ENCODE measurements at regions of chr21 and their contacts with region 1.

Region 1: DNA sequence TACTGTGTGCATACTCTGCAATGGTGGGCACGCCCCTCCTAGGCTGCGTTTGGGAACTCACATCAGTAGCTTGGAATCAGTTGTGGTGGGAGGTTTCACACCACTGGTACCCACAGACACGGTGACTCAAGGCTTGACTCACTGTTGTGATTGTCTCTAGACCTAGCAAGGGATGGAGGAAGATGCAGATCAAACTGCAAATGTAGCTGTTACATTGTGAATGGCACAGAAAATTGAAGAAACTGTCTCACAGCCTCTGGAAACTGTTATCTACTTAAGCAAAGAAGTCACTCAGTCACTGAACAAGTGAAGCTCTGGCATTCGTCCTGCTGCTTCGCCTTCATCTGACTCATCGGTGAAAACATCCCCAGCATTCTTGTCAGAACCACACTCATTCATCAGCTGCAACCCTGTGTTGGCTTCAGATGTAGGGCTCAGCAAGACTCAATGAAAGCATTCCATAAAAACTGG is 59.5 kb downstream of the POFUT2 start:
- DNase-seq: peak; percentile 61
- H3K4me3 Mint-ChIP-seq: no peak overlapping the region
- H3K27ac Mint-ChIP-seq: peak overlapping the region; percentile 41
- H3K4me1 Mint-ChIP-seq: peaks cover 34% of the 10 kb centered on the region
- H3K27me3 Mint-ChIP-seq: peaks cover 9% of the 10 kb centered on the region

Region 2: DNA sequence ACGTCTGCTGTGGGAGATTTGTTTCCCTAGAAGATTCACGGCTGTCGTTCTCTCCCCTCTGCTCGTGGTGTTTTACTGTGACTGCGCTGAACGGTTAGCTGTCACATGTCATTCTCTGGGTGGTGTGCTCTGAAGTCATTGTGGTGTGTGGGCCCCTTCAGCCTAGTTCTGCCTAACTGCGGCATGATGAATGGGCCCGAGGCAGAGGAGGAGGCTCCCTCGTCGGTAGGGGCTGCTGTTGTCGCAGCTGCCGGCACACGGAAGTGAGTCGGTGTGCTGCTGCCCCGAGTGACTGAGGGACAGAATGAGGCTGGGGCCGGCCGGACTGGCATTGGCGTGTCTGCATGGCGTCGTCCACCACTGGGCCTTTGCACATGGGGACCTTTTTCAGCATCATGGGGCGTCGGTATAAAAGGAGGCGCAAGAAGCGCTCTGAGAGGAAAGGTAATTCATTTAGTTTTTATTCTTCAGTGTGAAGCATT is 75.9 kb before region 1 on chr21:
- intact Hi-C with region 1: loop called (anchors 1 kb)
- DNase-seq: peak; percentile 61
- H3K4me3 Mint-ChIP-seq: peak overlapping the region; percentile 71
- H3K27ac Mint-ChIP-seq: peak overlapping the region; percentile 14
- H3K4me1 Mint-ChIP-seq: peaks cover 24% of the 10 kb centered on the region
- H3K27me3 Mint-ChIP-seq: no peaks in the 10 kb centered on the region

Region 3: GRCh38 chr21:45209046-45209445 is 19.2 kb before region 1 on chr21:
- intact Hi-C with region 1: loop called (anchors 2 kb)
- DNase-seq: no peak
- H3K4me3 Mint-ChIP-seq: no peak overlapping the region
- H3K27ac Mint-ChIP-seq: no peak overlapping the region
- H3K4me1 Mint-ChIP-seq: peaks cover 35% of the 10 kb centered on the region
- H3K27me3 Mint-ChIP-seq: no peaks in the 10 kb centered on the region

Region 4: GRCh38 chr21:45266518-45267389 is 38.5 kb after region 1 on chr21:
- intact Hi-C with region 1: loop called (anchors 1 kb)
- DNase-seq: peak; percentile 62
- H3K4me3 Mint-ChIP-seq: no peak overlapping the region
- H3K27ac Mint-ChIP-seq: peak overlapping the region; percentile 61
- H3K4me1 Mint-ChIP-seq: peaks cover 19% of the 10 kb centered on the region
- H3K27me3 Mint-ChIP-seq: no peaks in the 10 kb centered on the region

Measured in activated T-helper 1 cell treated with anti-CD3 and anti-CD28 coated beads, Interleukin-12 subunit alpha, Interleukin-12 subunit beta, Interleukin-2, Interleukin-4 antibody, amounts not matched to agents 30 ng/mL and 10 ng/mL and 1 ng/mL, durations not matched to agents 14 hours and 24 hours and 36 hours (primary cell).